IMR-90 (cell line): ENCODE measurements at regions of chr12 and their contacts with region 1.

Region 1: DNA sequence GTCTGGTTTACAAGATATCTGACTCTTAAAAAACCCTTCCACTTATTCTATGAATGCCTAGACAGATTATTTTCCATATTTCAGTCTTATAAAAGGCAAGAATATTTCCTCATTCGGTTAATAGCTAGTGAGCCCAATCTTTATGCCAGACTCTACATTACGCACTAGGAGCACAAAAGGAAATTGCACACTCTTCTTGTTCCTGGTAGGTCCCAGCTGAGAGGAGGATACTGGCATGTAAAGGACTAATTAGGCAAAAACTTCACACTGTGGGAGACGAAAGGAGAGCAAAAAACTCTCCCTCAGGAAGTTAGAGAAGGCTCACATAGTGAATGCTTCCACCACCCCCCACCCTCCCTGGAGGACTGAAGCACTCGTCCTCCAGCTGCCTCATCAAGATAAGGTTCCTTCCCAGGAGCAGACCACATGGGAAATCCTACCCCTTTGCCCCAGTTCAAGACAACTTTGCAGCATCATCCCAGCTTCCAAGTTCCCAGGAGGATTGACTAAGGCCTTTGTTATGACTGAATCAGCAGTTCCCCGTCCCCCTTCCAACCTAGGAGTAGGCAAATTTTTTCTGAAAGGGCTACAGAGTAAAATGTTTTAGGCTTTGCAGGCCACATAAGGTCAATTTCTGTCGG is 14.5 kb downstream of the CAPZA3 start:
- DNase-seq: peak; percentile 95
- ATAC-seq: peak; percentile 34
- H3K4me3 ChIP-seq: no peak overlapping the region
- H3K27ac ChIP-seq: no peak overlapping the region
- H3K4me1 ChIP-seq: peaks cover 18% of the 10 kb centered on the region
- H3K27me3 ChIP-seq: no peaks in the 10 kb centered on the region
- CTCF ChIP-seq: no peak
- POLR2A ChIP-seq: no peak
- RAD21 ChIP-seq: no peak

Region 2: DNA sequence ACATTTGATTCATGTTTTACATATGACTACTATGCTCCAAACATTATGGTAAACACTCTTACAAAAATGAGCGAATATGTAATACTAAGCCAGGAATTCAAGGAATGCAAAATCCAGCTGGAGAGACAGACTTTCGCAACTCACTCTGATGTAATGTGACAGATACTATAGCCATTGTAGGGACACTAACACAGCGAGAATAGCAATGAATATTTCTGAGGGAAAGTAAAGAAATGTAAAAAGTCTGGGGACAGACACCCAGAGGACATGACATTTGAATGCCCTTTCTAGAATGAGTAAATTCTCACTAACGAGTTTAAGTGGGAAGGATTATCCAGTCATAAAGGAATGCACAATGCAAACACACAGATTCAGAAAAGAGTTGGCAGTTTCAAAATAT is 369.2 kb before region 1 on chr12:
- CTCF ChIA-PET with region 1: no interaction called
- POLR2A ChIA-PET with region 1: no interaction called
- dilution Hi-C with region 1: no loop called
- in situ Hi-C with region 1: no loop called
- intact Hi-C with region 1: loop called (anchors 5 kb)
- DNase-seq: peak; percentile 89
- ATAC-seq: peak; percentile 78
- H3K4me3 ChIP-seq: no peak overlapping the region
- H3K27ac ChIP-seq: peak overlapping the region; percentile 75; the same call in 1 of the 2 replicates
- H3K4me1 ChIP-seq: peaks cover 5% of the 10 kb centered on the region
- H3K27me3 ChIP-seq: no peaks in the 10 kb centered on the region
- CTCF ChIP-seq: no peak
- POLR2A ChIP-seq: no peak
- RAD21 ChIP-seq: no peak

Region 3: GRCh38 chr12:18849080-18849479 is 96.7 kb after region 1 on chr12:
- CTCF ChIA-PET with region 1: interaction called, 5 read pairs
- POLR2A ChIA-PET with region 1: no interaction called
- dilution Hi-C with region 1: no loop called
- in situ Hi-C with region 1: no loop called
- intact Hi-C with region 1: loop called (anchors 1 kb)
- DNase-seq: peak; percentile 88
- ATAC-seq: peak; percentile 88
- H3K4me3 ChIP-seq: no peak overlapping the region
- H3K27ac ChIP-seq: no peak overlapping the region
- H3K4me1 ChIP-seq: peaks cover 3% of the 10 kb centered on the region
- H3K27me3 ChIP-seq: no peaks in the 10 kb centered on the region; the same call in 1 of the 2 replicates
- CTCF ChIP-seq: no peak
- POLR2A ChIP-seq: no peak
- RAD21 ChIP-seq: no peak

Region 4: GRCh38 chr12:19171736-19172135 is 419.3 kb after region 1 on chr12:
- CTCF ChIA-PET with region 1: no interaction called
- POLR2A ChIA-PET with region 1: interaction called, 11 read pairs
- dilution Hi-C with region 1: no loop called
- in situ Hi-C with region 1: no loop called
- intact Hi-C with region 1: no loop called
- DNase-seq: no peak
- ATAC-seq: peak; percentile 46
- H3K4me3 ChIP-seq: no peak overlapping the region
- H3K27ac ChIP-seq: no peak overlapping the region
- H3K4me1 ChIP-seq: peaks cover 5% of the 10 kb centered on the region
- H3K27me3 ChIP-seq: no peaks in the 10 kb centered on the region
- CTCF ChIP-seq: no peak
- POLR2A ChIP-seq: no peak
- RAD21 ChIP-seq: no peak